Calu3 (cell line): ENCODE measurements at regions of chr4 and their contacts with region 1.

Region 1: GRCh38 chr4:138242076-138242833 is at the start of gene SLC7A11:
- DNase-seq: peak; percentile 79
- H3K4me3 Mint-ChIP-seq: peak within 1 kb of the TSS; percentile 97
- H3K27ac Mint-ChIP-seq: peak within 1 kb of the TSS; percentile 99
- H3K4me1 Mint-ChIP-seq: no peaks in the 10 kb centered on the region
- H3K27me3 Mint-ChIP-seq: no peaks in the 10 kb centered on the region
- CTCF ChIP-seq: no peak
- total RNA-seq, gene SLC7A11: 37.7 and 49.4 TPM in 2 replicates

Region 2: GRCh38 chr4:138494931-138495330 is 252.7 kb after region 1 on chr4:
- CTCF ChIA-PET with region 1: interaction called, 10 read pairs
- intact Hi-C with region 1: loop called (anchors 2 kb)
- DNase-seq: peak; percentile 71
- H3K4me3 Mint-ChIP-seq: no peak overlapping the region
- H3K27ac Mint-ChIP-seq: no peak overlapping the region
- H3K4me1 Mint-ChIP-seq: peaks cover 18% of the 10 kb centered on the region
- H3K27me3 Mint-ChIP-seq: no peaks in the 10 kb centered on the region
- CTCF ChIP-seq: peak; percentile 23

Region 3: DNA sequence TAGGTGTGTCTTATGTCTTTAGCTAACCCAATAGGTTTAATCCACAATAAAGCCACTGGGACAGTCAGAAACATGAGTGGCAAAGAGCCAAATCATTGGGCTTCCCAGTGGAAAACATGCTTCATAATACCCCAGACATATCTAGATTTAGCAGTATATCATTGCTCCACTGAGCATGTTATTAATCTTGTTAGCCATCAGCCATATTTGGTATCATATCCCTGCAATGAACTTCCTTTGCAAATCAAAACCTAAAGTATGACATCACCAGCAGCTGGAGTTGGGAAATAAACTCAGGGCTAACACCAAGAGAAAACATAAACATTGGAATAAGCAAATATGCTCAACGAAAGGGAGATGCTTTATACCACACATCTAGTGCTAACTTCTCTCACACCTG is 492.5 kb after region 1 on chr4:
- CTCF ChIA-PET with region 1: no interaction called
- intact Hi-C with region 1: no loop called
- DNase-seq: no peak
- H3K4me3 Mint-ChIP-seq: no peak overlapping the region
- H3K27ac Mint-ChIP-seq: no peak overlapping the region
- H3K4me1 Mint-ChIP-seq: peaks cover 10% of the 10 kb centered on the region
- H3K27me3 Mint-ChIP-seq: no peaks in the 10 kb centered on the region
- CTCF ChIP-seq: no peak